GM12878 (cell line): ENCODE measurements at regions of chr1 and their contacts with region 1.

Region 1: GRCh38 chr1:179038528-179039283 is 13.0 kb downstream of the FAM20B start:
- DNase-seq: no peak
- ATAC-seq: no peak
- H3K4me3 ChIP-seq: no peak overlapping the region
- H3K27ac ChIP-seq: no peak overlapping the region
- H3K4me1 ChIP-seq: peaks cover 43% of the 10 kb centered on the region
- H3K27me3 ChIP-seq: no peaks in the 10 kb centered on the region
- CTCF ChIP-seq: no peak
- EP300 ChIP-seq: no peak
- POLR2A ChIP-seq: no peak
- RAD21 ChIP-seq: no peak

Region 2: GRCh38 chr1:178953034-178953433 is 85.7 kb before region 1 on chr1:
- CTCF ChIA-PET with region 1: no interaction called
- POLR2A ChIA-PET with region 1: no interaction called
- RAD21 ChIA-PET with region 1: no interaction called
- SMC1A ChIA-PET with region 1: no interaction called
- in situ Hi-C with region 1: no loop called
- intact Hi-C with region 1: no loop called
- DNase-seq: no peak
- ATAC-seq: no peak
- H3K4me3 ChIP-seq: no peak overlapping the region
- H3K27ac ChIP-seq: no peak overlapping the region
- H3K4me1 ChIP-seq: no peaks in the 10 kb centered on the region
- H3K27me3 ChIP-seq: peaks cover 0 to 3% of the 10 kb centered on the region in 2 experiments; a peak in 1 of 4 replicates
- CTCF ChIP-seq: no peak
- EP300 ChIP-seq: no peak
- POLR2A ChIP-seq: no peak
- RAD21 ChIP-seq: no peak

Region 3: DNA sequence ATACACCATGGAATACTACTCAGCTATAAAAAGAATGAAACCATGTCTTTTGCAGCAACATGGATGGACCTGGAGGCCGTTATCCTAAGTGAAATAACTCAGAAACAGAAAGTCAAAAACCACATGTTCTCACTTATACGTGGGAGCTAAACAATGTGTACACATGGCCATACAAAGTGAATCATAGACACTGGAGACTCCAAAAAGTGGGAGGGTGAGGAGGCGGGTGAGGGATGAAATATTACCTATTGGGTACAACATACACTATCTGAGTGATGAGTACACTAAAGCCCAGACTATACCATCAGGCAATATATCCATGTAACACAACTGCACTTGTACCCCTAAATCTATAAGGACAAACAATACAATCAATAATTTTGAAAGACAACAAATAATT is 52.5 kb before region 1 on chr1:
- CTCF ChIA-PET with region 1: no interaction called
- POLR2A ChIA-PET with region 1: no interaction called
- RAD21 ChIA-PET with region 1: no interaction called
- SMC1A ChIA-PET with region 1: no interaction called
- in situ Hi-C with region 1: no loop called
- intact Hi-C with region 1: no loop called
- DNase-seq: no peak
- ATAC-seq: no peak
- H3K4me3 ChIP-seq: no peak overlapping the region
- H3K27ac ChIP-seq: no peak overlapping the region
- H3K4me1 ChIP-seq: no peaks in the 10 kb centered on the region
- H3K27me3 ChIP-seq: no peaks in the 10 kb centered on the region
- CTCF ChIP-seq: no peak
- EP300 ChIP-seq: no peak
- POLR2A ChIP-seq: no peak
- RAD21 ChIP-seq: no peak

Region 4: DNA sequence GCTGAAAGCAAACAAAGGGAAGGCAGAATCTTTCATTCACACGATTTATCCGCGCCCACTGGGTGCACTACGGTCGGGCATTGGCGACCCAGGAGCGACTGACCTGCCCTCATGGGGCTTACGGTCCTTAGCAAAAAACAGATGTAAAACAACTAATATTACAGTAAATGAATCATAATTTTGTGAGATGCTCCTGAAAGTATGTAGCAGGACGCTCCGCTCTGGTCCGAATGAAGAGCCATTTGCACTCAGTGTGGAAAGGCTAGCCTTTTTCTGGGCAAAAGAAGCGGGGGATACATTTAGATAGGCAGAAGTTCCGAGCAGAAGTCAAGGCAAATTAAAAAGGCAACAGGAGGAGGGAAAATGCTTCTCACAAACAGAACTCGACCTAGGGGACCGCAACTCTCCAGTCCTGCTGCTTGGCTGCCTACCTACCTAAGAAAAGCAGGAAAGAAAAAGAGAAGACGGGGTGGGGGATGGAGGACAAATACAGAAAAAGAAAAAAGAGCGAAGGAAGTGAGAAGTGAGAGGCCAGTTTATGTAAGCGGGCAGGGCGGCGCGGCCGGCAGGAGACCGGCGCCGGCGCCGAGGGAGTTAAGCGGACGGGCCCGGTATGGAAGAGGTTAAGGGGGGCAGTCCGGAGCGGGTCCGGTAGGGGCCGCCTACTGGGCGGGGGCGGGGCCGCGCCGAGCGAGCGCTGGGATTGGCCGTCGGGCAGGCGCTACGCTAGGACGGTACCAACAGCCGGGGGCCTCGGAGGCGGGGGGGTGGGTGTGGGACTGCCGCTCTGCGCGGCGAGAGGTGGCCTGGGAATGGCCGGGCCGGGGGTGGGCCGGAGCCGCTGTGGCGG is 13.4 kb before region 1 on chr1 and contains the start of gene FAM20B:
- CTCF ChIA-PET with region 1: interaction called, 4 read pairs
- POLR2A ChIA-PET with region 1: interaction called, 4 read pairs
- RAD21 ChIA-PET with region 1: interaction called, 5 read pairs
- SMC1A ChIA-PET with region 1: interaction called, 12 read pairs
- in situ Hi-C with region 1: no loop called
- intact Hi-C with region 1: no loop called
- DNase-seq: peak; percentile 59
- ATAC-seq: peak; percentile 89
- H3K4me3 ChIP-seq: peak within 1 kb of the TSS; percentile 72
- H3K27ac ChIP-seq: peak within 1 kb of the TSS; percentile 81
- H3K4me1 ChIP-seq: peaks cover 19% of the 10 kb centered on the region
- H3K27me3 ChIP-seq: no peaks in the 10 kb centered on the region
- CTCF ChIP-seq: no peak
- EP300 ChIP-seq: no peak
- POLR2A ChIP-seq: no peak
- RAD21 ChIP-seq: no peak
- polyA plus RNA-seq, gene FAM20B: 2.4 to 4.0 TPM

Region 5: DNA sequence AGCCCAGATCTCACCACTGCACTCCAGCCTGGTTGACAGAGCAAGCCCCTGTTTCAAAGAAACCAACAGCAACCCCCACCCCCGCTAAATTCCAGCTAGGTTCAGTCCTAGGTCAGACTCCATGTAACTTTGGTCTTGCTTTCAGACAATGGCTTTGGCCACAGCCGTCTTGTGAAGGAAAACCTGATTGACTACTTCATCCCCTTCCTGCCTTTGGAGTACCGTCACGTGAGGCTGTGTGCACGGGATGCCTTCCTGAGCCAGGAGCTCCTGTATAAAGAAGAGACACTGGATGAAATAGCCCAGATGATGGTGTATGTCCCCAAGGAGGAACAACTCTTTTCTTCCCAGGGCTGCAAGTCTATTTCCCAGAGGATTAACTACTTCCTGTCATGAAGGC is 56.1 kb after region 1 on chr1:
- CTCF ChIA-PET with region 1: no interaction called
- POLR2A ChIA-PET with region 1: no interaction called
- RAD21 ChIA-PET with region 1: no interaction called
- SMC1A ChIA-PET with region 1: no interaction called
- in situ Hi-C with region 1: no loop called
- intact Hi-C with region 1: no loop called
- DNase-seq: no peak
- ATAC-seq: no peak
- H3K4me3 ChIP-seq: no peak overlapping the region
- H3K27ac ChIP-seq: no peak overlapping the region
- H3K4me1 ChIP-seq: no peaks in the 10 kb centered on the region
- H3K27me3 ChIP-seq: no peaks in the 10 kb centered on the region
- CTCF ChIP-seq: no peak
- EP300 ChIP-seq: no peak
- POLR2A ChIP-seq: no peak
- RAD21 ChIP-seq: no peak